ENCODE measurements at regions of chr6 and their contacts with region 1.

Region 1: DNA sequence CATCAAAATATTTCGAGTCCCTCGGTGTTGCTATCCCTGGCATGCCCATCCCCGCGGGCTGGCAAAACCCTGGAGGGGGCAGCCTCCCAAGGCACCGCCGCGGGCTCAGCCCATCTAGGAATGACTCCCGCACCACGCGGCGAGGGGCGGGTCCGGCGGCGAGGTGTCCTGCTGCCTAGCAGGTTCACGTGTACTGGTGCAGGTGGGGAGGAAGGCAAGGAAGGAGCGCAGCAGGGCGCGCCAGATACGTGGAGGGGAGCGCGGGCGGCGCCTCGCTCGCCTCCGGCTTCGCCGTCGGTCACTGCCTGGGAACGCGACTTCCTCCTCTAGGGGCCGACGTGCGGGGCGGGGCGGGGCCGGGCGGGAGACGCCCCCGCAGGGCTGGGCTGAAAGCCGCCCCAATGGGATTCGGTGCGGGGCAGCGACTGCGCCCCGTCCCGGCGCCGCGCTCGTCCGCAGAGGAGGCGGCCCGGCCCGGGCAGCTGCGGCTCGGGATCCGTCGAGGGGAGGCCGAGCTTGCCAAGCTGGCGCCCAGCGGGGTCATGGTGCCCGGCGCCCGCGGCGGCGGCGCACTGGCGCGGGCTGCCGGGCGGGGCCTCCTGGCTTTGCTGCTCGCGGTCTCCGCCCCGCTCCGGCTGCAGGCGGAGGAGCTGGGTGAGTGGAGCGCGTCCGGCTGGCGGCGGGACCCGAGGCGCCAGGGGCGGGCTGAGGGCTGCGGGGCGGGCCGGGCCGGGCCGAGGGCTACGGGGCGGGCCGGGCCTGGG is at the start of gene DCBLD1:
- DNase-seq: peak; percentile 80 to 91 (median 84)
- ATAC-seq: peak; percentile 82 to 97 (median 92)
- H3K4me3 ChIP-seq: peak within 1 kb of the TSS; percentile 62 to 88 (median 78)
- H3K27ac ChIP-seq: peak within 1 kb of the TSS; percentile 19 to 92 (median 84)
- H3K4me1 ChIP-seq: peaks cover 0 to 40% (median 15%) of the 10 kb centered on the region in 12 donors
- H3K27me3 ChIP-seq: peaks cover 0 to 5% (median 0%) of the 10 kb centered on the region in 9 donors
- CTCF ChIP-seq: peak in 2 of 12 donors; percentile 15 to 16
- POLR2A ChIP-seq: peak in 1 of 2 donors; percentile 66
- total RNA-seq, gene DCBLD1: 3.1 to 11.4 (median 4.1) TPM

Region 2: DNA sequence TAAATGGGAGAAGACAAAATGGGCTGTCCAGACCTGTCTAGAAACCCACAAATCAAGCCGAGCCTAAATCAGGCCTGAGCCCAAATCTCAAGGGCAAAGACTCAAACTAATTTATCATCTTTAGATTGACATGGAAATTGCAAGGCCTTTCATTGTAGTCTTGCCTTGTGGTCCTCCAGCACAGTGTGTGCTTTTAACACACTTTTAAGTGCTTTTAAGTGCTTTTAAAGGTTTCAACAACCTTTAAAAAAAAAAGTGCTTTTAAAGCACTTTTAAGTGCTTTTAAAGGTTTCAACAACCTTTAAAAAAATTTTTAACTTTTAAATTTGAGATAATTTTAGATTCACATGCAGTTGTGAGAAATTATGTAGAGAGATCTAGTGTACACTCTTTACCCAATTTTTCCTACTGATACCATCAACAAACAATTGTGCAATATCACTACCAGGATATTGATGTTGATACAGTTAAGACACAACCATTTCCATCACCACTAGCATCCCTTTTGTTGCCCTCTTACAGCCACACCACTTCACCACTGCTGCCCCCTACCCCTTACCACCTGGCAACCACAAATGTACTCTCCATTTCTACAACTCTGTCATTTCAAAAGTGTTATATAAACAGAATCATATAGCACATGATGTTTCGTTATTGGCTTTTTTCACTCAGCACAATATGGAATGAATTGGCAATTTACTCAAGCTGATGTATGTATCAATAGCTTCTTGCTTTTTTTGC is 23.0 kb before region 1 on chr6:
- intact Hi-C with region 1: no loop called
- DNase-seq: no peak
- ATAC-seq: no peak
- H3K4me3 ChIP-seq: no peak overlapping the region
- H3K27ac ChIP-seq: no peak overlapping the region
- H3K4me1 ChIP-seq: no peaks in the 10 kb centered on the region
- H3K27me3 ChIP-seq: no peaks in the 10 kb centered on the region
- CTCF ChIP-seq: no peak
- POLR2A ChIP-seq: no peak

Region 3: GRCh38 chr6:117547688-117548621 is 65.5 kb after region 1 on chr6:
- intact Hi-C with region 1: loop called in 5 of 10 experiments (anchors 5 to 10 kb)
- DNase-seq: peak; percentile 68 to 81 (median 72)
- ATAC-seq: peak; percentile 87 to 95 (median 94)
- H3K4me3 ChIP-seq: peak overlapping the region in 11 of 12 donors; percentile 6 to 66 (median 52)
- H3K27ac ChIP-seq: peak overlapping the region in 11 of 12 donors; percentile 7 to 74 (median 45)
- H3K4me1 ChIP-seq: peaks cover 0 to 22% (median 6%) of the 10 kb centered on the region in 12 donors
- H3K27me3 ChIP-seq: no peaks in the 10 kb centered on the region
- CTCF ChIP-seq: peak in 5 of 12 donors; percentile 14 to 44 (median 24)
- POLR2A ChIP-seq: peak in 1 of 2 donors; percentile 21

Region 4: DNA sequence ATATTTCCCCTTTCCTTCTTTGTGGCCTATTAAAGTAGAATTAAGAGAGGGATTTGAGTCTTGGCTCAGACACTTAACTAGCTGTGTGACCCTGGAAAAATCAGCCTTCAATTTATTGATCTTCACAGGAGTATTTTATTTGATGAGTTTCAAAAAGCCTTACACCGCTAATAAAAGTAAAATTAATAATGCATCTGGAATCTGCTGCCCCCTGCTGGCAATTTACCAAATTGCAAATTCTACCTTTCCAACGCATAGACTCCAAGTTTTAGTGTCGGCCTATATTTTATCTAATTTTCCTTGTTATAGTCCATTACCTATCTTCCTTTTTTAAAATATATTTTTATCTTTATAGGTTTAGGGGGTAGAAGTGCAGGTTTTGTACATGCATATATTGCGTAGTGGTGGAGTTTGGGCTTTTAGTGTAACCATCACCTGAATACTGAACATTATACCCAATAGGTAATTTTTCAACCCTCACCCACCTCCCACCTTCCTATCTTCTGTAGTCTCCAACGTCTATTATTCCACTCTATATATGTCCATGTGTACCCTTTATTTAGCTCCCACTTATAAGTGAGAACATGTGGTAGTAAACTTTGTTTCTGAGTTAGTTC is 73.6 kb after region 1 on chr6:
- intact Hi-C with region 1: loop called in 5 of 10 experiments (anchors 2 to 10 kb)
- DNase-seq: peak in 2 of 5 donors; percentile 33 to 35
- ATAC-seq: peak in 1 of 4 donors; percentile 28
- H3K4me3 ChIP-seq: no peak overlapping the region
- H3K27ac ChIP-seq: no peak overlapping the region
- H3K4me1 ChIP-seq: peaks cover 0 to 8% (median 0%) of the 10 kb centered on the region in 12 donors
- H3K27me3 ChIP-seq: no peaks in the 10 kb centered on the region
- CTCF ChIP-seq: peak; percentile 74 to 97 (median 91)
- POLR2A ChIP-seq: no peak

Region 5: DNA sequence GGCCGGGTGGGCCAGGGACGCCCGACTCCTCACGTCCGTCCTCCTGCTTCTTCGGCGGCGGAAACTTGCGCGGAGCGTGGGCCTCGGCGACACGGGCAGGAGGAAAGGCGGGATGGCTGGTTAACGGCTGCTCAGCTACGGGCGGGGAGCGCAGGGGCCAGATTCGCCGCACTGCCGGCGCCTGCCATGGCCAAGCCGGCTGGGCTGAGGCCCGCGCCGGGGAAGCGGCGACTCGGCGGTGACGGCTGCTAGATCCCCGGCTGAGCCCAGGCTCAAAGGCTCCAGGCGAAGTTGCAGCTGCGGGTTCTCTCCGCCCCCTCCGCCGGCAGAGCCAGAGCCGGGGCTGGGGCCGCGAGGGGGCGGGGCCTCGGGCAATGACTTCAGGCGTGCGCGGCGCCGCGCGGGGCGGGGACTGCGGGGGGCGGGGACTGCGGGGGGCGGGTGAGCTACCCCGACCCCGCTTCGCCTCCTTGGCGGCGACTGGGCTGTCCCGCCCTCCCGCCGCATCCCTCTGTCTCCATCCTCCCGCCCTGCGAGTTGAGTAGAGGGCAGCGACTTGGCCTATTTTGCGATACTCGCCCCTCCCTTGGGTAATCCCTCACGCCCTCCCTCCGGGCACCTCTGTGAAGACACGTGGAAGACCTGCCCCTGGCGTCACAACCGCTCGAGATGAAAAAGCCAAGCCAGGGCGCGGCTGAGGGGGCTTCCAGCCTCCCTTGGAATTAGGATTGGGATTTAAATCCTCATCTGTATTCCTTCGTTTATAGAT is 1169.0 kb after region 1 on chr6 and contains the start of gene CEP85L:
- intact Hi-C with region 1: loop called in 1 of 10 experiments (anchors 10 kb)
- DNase-seq: peak; percentile 93 to 96 (median 94)
- ATAC-seq: peak; percentile 95 to 99 (median 98)
- H3K4me3 ChIP-seq: peak within 1 kb of the TSS; percentile 69 to 98 (median 93)
- H3K27ac ChIP-seq: peak within 1 kb of the TSS; percentile 86 to 99 (median 96)
- H3K4me1 ChIP-seq: peaks cover 5 to 30% (median 13%) of the 10 kb centered on the region in 12 donors
- H3K27me3 ChIP-seq: no peaks in the 10 kb centered on the region
- CTCF ChIP-seq: peak in 1 of 12 donors; percentile 5
- POLR2A ChIP-seq: peak; percentile 38 to 91
- total RNA-seq, gene CEP85L: 5.1 to 14.4 (median 7.6) TPM

Measured in heart left ventricle (tissue), 16 donors.